HCT116 (cell line): ENCODE measurements at regions of chr3 and their contacts with region 1.

Region 1: GRCh38 chr3:48364840-48365239 is 7.2 kb upstream of the FBXW12 start:
- DNase-seq: no peak
- ATAC-seq: no peak
- H3K4me3 ChIP-seq: no peak overlapping the region
- H3K27ac ChIP-seq: no peak overlapping the region
- H3K4me1 ChIP-seq: peaks cover 2 to 7% of the 10 kb centered on the region in 2 experiments; a peak in 3 of 4 replicates
- H3K27me3 ChIP-seq: no peaks in the 10 kb centered on the region
- CTCF ChIP-seq: no peak
- POLR2A ChIP-seq: no peak
- RAD21 ChIP-seq: no peak

Region 2: GRCh38 chr3:48320996-48321395 is 43.8 kb before region 1 on chr3:
- CTCF ChIA-PET with region 1: interaction called, 3 read pairs
- POLR2A ChIA-PET with region 1: no interaction called
- RAD21 ChIA-PET with region 1: no interaction called
- intact Hi-C with region 1: loop called (anchors 5 kb)
- DNase-seq: no peak
- ATAC-seq: no peak
- H3K4me3 ChIP-seq: no peak overlapping the region
- H3K27ac ChIP-seq: no peak overlapping the region
- H3K4me1 ChIP-seq: no peaks in the 10 kb centered on the region
- H3K27me3 ChIP-seq: no peaks in the 10 kb centered on the region
- CTCF ChIP-seq: no peak
- POLR2A ChIP-seq: no peak
- RAD21 ChIP-seq: no peak